ENCODE measurements at regions of chr7 and their contacts with region 1.

Region 1: GRCh38 chr7:138738551-138739335 is 37.6 kb upstream of the SVOPL start:
- DNase-seq: peak; percentile 73 to 86
- ATAC-seq: peak; percentile 98 to 99
- H3K4me3 ChIP-seq: no peak overlapping the region
- H3K27ac ChIP-seq: peak overlapping the region; percentile 50 to 57; a peak in 5 of 6 replicates
- H3K4me1 ChIP-seq: peaks cover 5% of the 10 kb centered on the region; the same call in 1 of the 3 replicates
- CTCF ChIP-seq: peak; percentile 96
- EP300 ChIP-seq: no peak
- POLR2A ChIP-seq: no peak
- RAD21 ChIP-seq: peak; percentile 96 to 98

Region 2: DNA sequence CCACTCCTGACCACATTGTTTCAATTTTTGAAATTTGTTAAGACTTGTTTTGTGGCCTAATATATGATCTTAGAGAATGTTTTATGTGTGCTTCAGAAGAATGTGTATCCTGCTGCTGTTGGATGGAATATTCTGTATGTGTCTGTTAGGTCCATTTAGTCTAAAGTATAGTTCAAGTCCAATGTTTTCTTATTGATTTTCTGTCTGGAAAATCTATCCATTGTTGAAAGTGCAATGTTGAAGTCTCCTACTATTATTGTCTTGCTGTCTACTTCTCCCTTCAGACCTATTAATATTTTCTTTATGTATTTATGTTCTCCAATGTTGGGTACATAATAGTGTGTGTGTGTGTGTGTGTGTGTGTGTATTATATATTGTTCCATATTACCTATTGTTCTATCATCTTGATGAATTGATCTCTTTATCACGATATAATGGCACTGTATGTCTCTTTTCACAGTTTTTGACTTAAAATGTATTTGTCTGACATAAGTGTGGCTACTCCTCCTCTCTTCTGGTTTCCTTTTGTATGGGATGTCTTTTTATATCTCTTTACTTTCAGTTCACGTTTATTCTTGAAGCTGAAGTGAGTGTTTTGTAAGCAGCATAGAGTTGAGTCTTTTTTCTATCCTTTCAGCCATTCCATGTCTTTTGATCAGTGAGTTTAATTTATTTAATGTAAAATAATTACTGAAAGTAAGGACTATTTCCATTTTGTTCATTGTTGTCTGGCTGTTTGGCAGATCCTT is 601.1 kb before region 1 on chr7:
- CTCF ChIA-PET with region 1: interaction called, 3 read pairs
- POLR2A ChIA-PET with region 1: interaction called, 11 read pairs
- DNase-seq: no peak
- ATAC-seq: no peak
- H3K4me3 ChIP-seq: no peak overlapping the region
- H3K27ac ChIP-seq: no peak overlapping the region
- H3K4me1 ChIP-seq: no peaks in the 10 kb centered on the region
- CTCF ChIP-seq: no peak
- EP300 ChIP-seq: no peak
- POLR2A ChIP-seq: no peak
- RAD21 ChIP-seq: no peak

Region 3: DNA sequence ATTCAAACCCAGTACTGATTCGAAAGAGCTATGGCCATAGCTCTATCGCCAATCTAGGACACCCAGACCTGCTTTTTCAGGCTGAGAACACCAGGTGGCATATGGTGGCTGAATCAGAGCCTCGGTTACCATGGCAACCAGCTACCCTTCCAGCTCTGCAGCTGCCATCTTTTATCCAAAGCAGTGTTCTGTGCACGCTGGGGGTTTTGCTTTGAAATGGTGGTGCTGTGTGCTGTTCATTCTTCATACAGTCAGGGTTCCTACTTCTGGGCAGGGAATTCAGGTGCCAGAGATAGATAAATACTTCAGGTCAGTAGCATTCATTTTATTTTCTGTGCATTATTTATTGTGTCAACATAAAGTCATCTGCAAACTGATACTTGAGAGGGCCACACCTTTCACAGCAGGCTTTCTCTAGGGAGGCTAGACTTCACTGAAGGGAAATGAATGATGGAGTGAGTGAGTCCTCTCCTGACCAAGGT is 577.1 kb before region 1 on chr7:
- CTCF ChIA-PET with region 1: interaction called, 32 read pairs
- POLR2A ChIA-PET with region 1: interaction called, 5 read pairs
- DNase-seq: peak; percentile 88 to 89
- ATAC-seq: peak; percentile 89 to 100
- H3K4me3 ChIP-seq: no peak overlapping the region
- H3K27ac ChIP-seq: no peak overlapping the region
- H3K4me1 ChIP-seq: no peaks in the 10 kb centered on the region
- CTCF ChIP-seq: peak; percentile 58
- EP300 ChIP-seq: no peak
- POLR2A ChIP-seq: no peak
- RAD21 ChIP-seq: peak; percentile 75 to 78

Region 4: GRCh38 chr7:138726288-138726687 is 12.5 kb before region 1 on chr7:
- CTCF ChIA-PET with region 1: interaction called, 15 read pairs
- POLR2A ChIA-PET with region 1: no interaction called
- DNase-seq: peak in 1 of 2 experiments; percentile 29
- ATAC-seq: peak; percentile 71 to 81; a peak in 4 of 6 replicates
- H3K4me3 ChIP-seq: no peak overlapping the region
- H3K27ac ChIP-seq: no peak overlapping the region
- H3K4me1 ChIP-seq: no peaks in the 10 kb centered on the region
- CTCF ChIP-seq: no peak; the same call in 2 of the 3 replicates
- EP300 ChIP-seq: no peak
- POLR2A ChIP-seq: no peak
- RAD21 ChIP-seq: 0 out of 5 replicates have a peak, but pooled peaks of 1 of the 2 experiments have one; percentile 5

Region 5: DNA sequence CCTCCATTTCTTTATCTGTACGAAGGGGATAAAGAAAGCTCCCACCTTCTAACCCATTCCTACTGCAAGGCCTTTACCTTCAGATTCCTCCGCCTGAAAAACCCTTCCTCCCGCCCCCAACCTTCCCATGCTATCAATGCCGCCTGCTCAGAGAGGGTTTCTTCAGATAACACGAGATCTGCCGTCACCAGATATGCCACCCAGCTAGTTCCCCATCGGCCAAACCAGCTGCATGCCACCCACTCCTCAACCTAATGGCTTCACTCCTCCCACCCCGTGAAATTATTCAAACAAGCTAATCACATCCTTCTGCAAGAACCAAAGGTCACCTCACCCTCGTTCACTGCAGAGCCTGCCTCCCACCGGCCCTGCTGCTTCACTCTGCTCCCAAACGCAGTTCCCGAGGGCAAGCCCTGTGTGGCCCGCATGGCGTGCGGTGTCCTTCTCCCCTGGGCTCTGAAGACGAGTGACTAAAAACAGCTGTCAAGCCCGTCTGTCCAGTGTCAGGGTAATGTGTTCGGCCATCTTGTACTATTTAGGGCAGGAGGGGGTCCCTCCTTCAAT is 12.2 kb after region 1 on chr7:
- CTCF ChIA-PET with region 1: interaction called, 23 read pairs
- POLR2A ChIA-PET with region 1: no interaction called
- DNase-seq: no peak
- ATAC-seq: no peak
- H3K4me3 ChIP-seq: no peak overlapping the region
- H3K27ac ChIP-seq: no peak overlapping the region
- H3K4me1 ChIP-seq: peaks cover 9% of the 10 kb centered on the region; the same call in 2 of the 3 replicates
- CTCF ChIP-seq: no peak
- EP300 ChIP-seq: no peak
- POLR2A ChIP-seq: no peak
- RAD21 ChIP-seq: no peak

Region 6: DNA sequence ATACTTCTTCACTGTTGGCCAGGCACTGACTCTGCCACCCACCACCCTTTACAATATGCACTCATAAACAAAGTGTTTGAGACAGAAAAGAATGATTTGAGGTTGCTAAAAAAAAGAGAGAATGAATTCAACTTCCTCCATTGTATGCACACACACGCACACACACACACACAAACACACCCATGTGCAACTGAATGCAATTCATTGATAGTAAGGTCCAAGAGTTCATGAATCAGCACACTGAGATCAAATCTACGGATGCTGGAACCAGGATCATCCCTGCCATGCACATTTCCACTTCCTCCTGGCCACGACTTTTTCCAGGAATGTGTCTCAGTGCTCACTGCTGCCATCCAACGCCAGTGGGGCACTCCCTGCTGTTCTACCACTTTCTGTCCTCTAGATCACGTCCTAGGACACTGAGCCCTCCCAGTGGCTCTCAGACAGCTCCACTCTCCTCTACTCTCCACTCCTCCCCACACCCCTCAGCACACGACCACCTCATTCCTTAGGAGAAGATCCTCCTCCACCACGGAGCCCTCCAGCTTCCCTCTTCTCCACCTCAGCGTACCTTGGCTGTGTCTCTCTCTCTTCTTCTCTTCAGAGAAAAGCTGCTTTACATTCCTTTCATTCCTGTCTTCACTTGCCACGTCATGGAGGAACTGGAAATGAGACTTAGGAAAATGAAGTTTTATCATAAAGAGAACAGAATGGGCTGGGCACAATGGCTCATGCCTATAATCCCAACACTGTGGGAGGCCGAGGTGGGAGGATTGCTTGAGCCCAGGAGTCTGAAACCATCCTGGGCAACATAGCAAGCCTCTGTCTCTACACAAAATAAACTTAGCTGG is 47.1 kb after region 1 on chr7:
- CTCF ChIA-PET with region 1: no interaction called
- POLR2A ChIA-PET with region 1: no interaction called
- DNase-seq: peak; percentile 44 to 59
- ATAC-seq: peak; percentile 96 to 97
- H3K4me3 ChIP-seq: no peak overlapping the region
- H3K27ac ChIP-seq: peak overlapping the region; percentile 54 to 68; a peak in 5 of 6 replicates
- H3K4me1 ChIP-seq: peaks cover 10% of the 10 kb centered on the region
- CTCF ChIP-seq: no peak
- EP300 ChIP-seq: no peak
- POLR2A ChIP-seq: no peak
- RAD21 ChIP-seq: no peak